A673 (cell line): ENCODE measurements at regions of chr7 and their contacts with region 1.

Region 1: GRCh38 chr7:129271500-129272355 is 46.9 kb downstream of the AHCYL2 start:
- DNase-seq: peak; percentile 88
- H3K4me3 ChIP-seq: no peak overlapping the region
- H3K27ac ChIP-seq: no peak overlapping the region
- H3K4me1 ChIP-seq: peaks cover 7% of the 10 kb centered on the region
- H3K27me3 ChIP-seq: no peaks in the 10 kb centered on the region
- CTCF ChIP-seq: peak; percentile 84

Region 2: DNA sequence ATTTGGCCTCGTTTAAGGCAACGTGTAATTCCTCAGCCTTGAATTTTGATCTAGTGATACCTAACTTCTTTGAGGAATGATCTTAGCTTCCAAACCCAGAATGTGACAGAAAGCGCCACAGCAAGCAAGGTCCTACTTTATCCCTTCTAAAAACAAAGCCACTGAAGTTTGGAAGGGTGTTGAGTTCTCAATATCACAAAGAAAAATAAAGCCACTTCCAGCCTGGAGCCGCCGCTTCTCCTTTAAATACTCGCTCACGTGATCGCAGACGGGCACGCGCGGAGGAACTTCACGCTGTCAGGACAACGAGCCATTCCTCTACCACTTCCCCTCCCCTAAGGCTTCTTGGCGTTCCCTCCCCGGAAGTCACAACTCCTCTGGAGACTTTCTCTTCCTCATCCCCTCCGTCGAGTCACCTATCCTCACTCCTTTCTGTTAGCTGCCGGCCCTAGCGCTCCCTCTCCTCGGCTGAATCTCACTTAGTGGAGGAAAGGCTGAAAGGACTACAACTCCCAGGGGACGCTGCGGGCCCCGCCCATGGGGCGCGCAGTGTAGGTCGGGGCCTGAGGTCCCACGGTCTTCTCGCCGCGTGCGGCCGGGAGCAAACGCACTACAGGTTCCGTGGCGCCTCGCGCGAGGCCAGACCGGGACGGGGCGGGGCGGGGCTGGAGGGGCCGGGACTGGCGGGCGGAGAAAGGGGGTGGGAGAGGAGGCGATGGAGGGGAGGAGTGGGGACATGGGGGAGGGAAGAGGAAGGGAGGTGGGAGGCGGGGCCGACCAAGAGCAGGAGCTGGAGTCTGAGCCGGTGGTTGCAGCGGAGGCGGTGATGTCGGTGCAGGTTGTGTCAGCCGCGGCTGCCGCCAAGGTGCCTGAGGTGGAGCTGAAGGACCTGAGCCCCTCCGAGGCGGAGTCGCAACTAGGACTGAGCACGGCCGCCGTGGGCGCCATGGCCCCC is 47.2 kb before region 1 on chr7 and contains the start of gene AHCYL2:
- CTCF ChIA-PET with region 1: interaction called, 3 read pairs
- POLR2A ChIA-PET with region 1: no interaction called
- intact Hi-C with region 1: loop called (anchors 1 kb)
- DNase-seq: peak; percentile 99
- H3K4me3 ChIP-seq: peak within 1 kb of the TSS; percentile 81
- H3K27ac ChIP-seq: peak within 1 kb of the TSS; percentile 89
- H3K4me1 ChIP-seq: peaks cover 8% of the 10 kb centered on the region
- H3K27me3 ChIP-seq: no peaks in the 10 kb centered on the region
- CTCF ChIP-seq: no peak
- total RNA-seq, gene AHCYL2: 27.2 and 35.2 TPM in 2 replicates